GM10248 (cell line): ENCODE measurements at regions of chr17 and their contacts with region 1.

Region 1: GRCh38 chr17:67559377-67559966 is 158.3 kb upstream of the NOL11 start:
- DNase-seq: no peak
- CTCF ChIP-seq: peak; percentile 47

Region 2: DNA sequence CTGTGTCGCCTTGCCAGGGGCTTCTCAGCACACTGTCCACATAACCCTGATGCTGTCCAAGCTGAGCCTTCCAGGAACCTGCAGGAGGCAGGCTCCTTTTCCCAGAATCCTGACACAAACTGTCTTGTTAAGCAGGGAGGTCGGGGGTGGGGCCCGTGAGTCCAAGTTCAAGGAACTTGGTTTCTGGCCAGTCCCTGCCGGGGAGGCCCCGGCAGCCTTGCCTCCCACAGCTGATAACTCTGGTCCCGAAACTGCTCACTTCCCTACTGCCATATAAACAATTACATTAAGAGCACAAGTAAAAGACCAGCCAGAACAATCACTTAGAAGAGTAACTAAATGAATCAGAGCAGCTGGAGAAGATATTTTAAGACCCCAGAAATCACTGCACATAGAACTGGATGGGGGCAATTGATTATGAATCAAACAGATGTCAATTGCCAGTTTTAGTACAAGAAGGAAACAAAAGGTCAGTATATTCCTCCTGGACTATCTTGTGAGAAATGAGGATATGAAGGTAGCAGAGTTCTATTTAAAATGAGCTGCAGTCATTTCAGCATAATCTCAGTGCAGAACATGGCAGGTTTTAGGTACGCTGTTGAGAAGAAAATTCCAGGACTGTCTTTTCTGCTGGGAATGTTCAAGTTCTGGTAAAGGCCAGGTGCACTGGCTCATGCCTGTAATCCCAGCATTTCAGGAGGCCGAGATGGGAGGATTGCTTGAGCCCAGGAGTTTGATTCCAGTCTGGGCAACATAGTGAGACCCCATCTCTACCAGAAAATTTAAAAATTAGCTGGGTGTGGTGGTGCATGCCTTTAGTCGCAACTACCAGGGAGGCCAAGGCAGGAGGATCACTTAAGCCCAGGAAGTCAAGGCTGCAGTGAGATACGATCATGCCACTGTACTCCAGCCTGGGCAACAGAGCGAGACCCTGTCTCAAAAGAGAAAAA is 12.6 kb before region 1 on chr17:
- CTCF ChIA-PET with region 1: interaction called, 19 read pairs
- POLR2A ChIA-PET with region 1: no interaction called
- DNase-seq: peak; percentile 83
- CTCF ChIP-seq: no peak

Region 3: GRCh38 chr17:67569873-67570272 is 10.4 kb after region 1 on chr17:
- CTCF ChIA-PET with region 1: interaction called, 26 read pairs
- POLR2A ChIA-PET with region 1: interaction called, 3 read pairs
- DNase-seq: no peak
- CTCF ChIP-seq: no peak